Activated B cell treated with CpG ODN at 0.5 μM for 24 hours (primary cell): ENCODE measurements at regions of chr17 and their contacts with region 1.

Region 1: DNA sequence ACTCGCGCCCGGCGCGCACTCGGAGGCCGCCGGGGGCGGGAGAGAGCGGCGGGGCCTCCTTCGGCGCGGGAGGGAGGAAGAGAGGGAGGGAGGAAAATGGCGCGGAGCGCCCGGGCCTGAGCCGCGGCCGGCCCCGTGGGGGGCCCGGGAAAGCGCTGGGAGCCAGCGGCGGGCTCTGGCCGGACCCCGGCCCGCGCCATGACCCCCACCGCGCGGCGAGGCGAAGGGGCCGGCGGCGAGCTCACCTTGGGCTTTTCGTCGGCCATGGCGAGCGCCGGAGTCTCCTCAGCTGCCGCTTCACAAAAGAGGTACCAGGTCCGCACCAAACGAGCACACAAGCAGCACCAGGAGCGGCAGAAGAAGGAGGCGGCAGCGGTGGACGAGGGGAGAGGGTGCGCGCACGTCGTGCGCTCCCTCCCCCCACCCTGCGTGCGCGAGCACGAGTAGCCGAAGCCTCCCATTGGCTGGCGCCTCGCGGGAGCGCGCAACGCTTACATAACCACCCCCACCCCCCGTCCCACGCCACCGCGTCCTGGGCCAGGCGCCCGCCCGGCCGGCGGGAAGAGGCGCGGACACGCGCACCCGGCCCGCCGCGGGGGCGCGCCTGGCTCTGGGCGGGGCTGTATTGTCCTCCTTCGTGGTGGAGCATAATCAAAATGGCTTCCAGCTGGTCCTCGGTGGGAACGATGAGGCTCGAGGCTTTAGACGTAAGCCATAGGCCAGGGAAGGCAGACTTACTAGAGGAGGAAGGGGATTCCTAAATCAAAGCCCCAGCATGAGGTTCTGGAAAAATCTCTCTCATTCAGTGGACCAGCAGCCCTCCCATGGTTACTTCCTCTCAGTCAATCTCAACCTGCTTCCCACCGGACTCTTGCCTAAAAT is at the start of gene SUMO2:
- DNase-seq: peak; percentile 96
- ATAC-seq: peak; percentile 82
- H3K4me3 Mint-ChIP-seq: peak within 1 kb of the TSS; percentile 86
- H3K27ac Mint-ChIP-seq: peak within 1 kb of the TSS; percentile 97
- H3K4me1 Mint-ChIP-seq: peaks cover 38% of the 10 kb centered on the region
- H3K27me3 Mint-ChIP-seq: no peaks in the 10 kb centered on the region
- CTCF ChIP-seq: no peak
- total RNA-seq, gene SUMO2: 365 and 394 TPM in 2 replicates

Region 2: GRCh38 chr17:74972107-74972972 is 210.5 kb before region 1 on chr17 and contains the start of gene HID1:
- CTCF ChIA-PET with region 1: no interaction called
- POLR2A ChIA-PET with region 1: no interaction called
- intact Hi-C with region 1: loop called (anchors 5 kb)
- DNase-seq: peak; percentile 69
- ATAC-seq: peak; percentile 92
- H3K4me3 Mint-ChIP-seq: peak within 1 kb of the TSS; percentile 76
- H3K27ac Mint-ChIP-seq: peak within 1 kb of the TSS; percentile 2
- H3K4me1 Mint-ChIP-seq: peaks cover 6% of the 10 kb centered on the region
- H3K27me3 Mint-ChIP-seq: peaks cover 19% of the 10 kb centered on the region
- CTCF ChIP-seq: no peak
- total RNA-seq, gene HID1: 1.5 and 2.1 TPM in 2 replicates

Region 3: DNA sequence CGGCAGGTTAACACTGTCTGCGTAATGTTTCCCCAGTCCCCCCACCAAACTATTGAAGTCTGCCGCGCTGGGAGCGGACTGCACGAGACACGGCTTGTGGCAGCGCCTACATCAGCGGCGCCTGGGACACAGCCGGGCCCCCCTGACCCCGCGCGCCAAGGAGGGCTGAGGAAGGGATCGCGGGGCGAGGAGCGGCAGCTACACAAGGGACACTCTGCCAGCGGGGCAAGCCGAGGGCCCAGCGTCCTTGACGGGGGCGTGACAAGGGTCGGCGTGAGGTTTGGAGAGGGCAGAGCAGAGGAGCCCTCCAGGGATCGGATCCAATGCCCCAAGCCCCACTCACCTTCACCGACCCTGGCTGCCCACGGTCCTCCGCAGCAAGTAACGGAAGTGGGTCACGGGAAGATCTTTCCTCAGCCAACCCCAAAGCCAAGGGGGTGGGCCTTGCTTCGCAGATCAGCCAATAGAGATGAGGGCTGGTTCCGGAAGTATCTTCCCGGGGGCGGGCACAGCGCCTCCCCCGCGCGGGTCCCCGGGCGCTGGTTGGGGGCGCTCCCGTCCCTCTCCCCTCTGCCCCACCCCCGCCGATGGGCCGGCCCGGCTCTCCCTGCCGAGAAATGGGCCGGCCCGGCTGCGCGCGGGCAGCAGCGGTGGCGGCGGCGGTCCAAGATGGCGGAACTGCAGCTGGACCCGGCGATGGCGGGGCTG is 136.1 kb before region 1 on chr17 and contains the starts of genes ATP5PD and KCTD2:
- CTCF ChIA-PET with region 1: no interaction called
- POLR2A ChIA-PET with region 1: interaction called, 3 read pairs
- intact Hi-C with region 1: loop called (anchors 2 kb)
- DNase-seq: peak; percentile 91
- ATAC-seq: peak; percentile 95
- H3K4me3 Mint-ChIP-seq: peak within 1 kb of the TSS; percentile 97
- H3K27ac Mint-ChIP-seq: peak within 1 kb of the TSS; percentile 86
- H3K4me1 Mint-ChIP-seq: peaks cover 37% of the 10 kb centered on the region
- H3K27me3 Mint-ChIP-seq: no peaks in the 10 kb centered on the region
- CTCF ChIP-seq: no peak
- total RNA-seq, gene ATP5PD: 158 and 181 TPM in 2 replicates
- total RNA-seq, gene KCTD2: 19.5 and 20.2 TPM in 2 replicates

Region 4: GRCh38 chr17:75116737-75117136 is 66.1 kb before region 1 on chr17:
- CTCF ChIA-PET with region 1: interaction called, 11 read pairs
- POLR2A ChIA-PET with region 1: interaction called, 19 read pairs
- intact Hi-C with region 1: no loop called
- DNase-seq: no peak
- ATAC-seq: no peak
- H3K4me3 Mint-ChIP-seq: no peak overlapping the region
- H3K27ac Mint-ChIP-seq: no peak overlapping the region
- H3K4me1 Mint-ChIP-seq: peaks cover 64% of the 10 kb centered on the region
- H3K27me3 Mint-ChIP-seq: no peaks in the 10 kb centered on the region
- CTCF ChIP-seq: no peak

Region 5: DNA sequence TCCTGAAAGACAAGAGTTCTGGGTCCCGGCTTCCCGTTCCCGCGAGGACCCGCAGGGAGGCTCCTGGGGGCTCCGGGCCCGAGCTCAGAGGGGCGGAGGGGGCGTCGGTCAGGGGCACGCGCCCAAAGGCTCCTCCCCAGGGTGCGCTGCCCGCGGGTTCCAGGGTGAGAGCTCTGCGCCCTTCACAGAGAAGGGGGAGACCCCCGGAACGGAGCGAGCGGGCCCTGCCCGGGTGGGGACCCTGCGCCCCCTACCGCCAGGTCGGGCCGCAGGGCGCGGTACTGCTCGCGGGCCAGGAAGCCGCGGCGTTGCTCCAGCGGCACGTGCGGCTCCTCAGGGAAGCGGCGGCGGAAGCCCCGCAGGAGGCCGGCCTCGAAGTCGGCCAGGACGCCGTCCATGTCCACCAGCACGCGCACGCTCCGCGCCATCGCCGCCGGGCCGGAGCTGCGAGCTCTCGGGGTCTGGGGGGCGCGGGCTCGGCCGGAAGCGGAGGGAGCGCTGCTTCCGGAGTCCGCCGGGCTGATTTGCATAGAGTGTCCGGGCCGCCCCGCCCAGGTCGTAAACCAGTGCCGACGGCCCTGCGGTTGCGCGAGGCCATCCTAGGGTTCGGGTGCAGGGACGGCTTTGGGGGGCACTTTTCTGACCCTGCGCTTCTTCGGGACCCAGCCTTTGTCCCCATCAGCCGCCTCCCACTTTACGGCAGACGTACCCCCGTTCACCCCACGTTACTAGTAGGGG is 51.4 kb before region 1 on chr17 and contains the start of gene NT5C:
- CTCF ChIA-PET with region 1: no interaction called
- POLR2A ChIA-PET with region 1: interaction called, 11 read pairs
- intact Hi-C with region 1: loop called (anchors 5 kb)
- DNase-seq: peak; percentile 83
- ATAC-seq: peak; percentile 83
- H3K4me3 Mint-ChIP-seq: peak within 1 kb of the TSS; percentile 88
- H3K27ac Mint-ChIP-seq: peak within 1 kb of the TSS; percentile 92
- H3K4me1 Mint-ChIP-seq: peaks cover 28% of the 10 kb centered on the region
- H3K27me3 Mint-ChIP-seq: no peaks in the 10 kb centered on the region
- CTCF ChIP-seq: no peak
- total RNA-seq, gene NT5C: 95.0 and 98.2 TPM in 2 replicates

Region 6: GRCh38 chr17:75205037-75205792 is 22.4 kb after region 1 on chr17 and contains the start of gene NUP85:
- CTCF ChIA-PET with region 1: interaction called, 9 read pairs
- POLR2A ChIA-PET with region 1: interaction called, 9 read pairs
- intact Hi-C with region 1: loop called (anchors 1 kb)
- DNase-seq: peak; percentile 90
- ATAC-seq: peak; percentile 91
- H3K4me3 Mint-ChIP-seq: peak within 1 kb of the TSS; percentile 96
- H3K27ac Mint-ChIP-seq: peak within 1 kb of the TSS; percentile 99
- H3K4me1 Mint-ChIP-seq: peaks cover 22% of the 10 kb centered on the region
- H3K27me3 Mint-ChIP-seq: no peaks in the 10 kb centered on the region
- CTCF ChIP-seq: no peak
- total RNA-seq, gene NUP85: 103 and 107 TPM in 2 replicates